Endothelial cell of umbilical vein (primary cell): ENCODE measurements at regions of chr20 and their contacts with region 1.

Region 1: DNA sequence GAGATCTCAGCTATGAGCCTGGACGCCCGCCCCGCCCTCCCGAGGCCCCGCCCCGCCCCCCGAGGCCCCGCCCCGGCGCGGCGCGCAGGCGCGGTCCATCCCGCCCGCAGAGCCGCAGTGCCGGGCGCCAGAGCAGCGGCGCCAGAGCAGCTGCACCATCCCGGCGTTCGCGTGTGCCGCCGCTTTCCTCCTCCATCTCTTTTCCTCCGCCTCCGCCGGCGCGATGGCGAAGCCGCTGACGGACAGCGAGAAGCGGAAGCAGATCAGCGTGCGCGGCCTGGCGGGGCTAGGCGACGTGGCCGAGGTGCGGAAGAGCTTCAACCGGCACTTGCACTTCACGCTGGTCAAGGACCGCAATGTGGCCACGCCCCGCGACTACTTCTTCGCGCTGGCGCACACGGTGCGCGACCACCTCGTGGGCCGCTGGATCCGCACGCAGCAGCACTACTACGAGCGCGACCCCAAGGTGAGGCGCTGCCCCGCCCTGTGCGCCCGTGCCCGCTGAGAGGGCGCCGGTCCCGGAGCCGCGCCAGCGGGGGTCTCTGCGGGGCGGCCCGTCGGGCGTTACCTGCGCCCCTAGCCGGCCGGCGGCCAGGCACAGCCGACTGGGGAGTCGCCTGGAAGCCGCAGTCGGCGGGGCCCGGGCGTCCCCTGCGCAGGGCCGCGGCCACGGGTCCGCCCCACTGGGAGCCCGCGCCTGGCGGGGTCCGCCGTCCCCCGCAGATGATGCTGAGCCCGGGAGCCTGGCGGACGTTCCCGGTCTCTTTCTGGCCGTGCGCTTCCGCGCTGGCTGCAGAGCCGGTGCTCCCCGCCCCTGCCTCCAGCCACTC is at the start of gene PYGB:
- DNase-seq: peak; percentile 88
- H3K4me3 ChIP-seq: peak within 1 kb of the TSS; percentile 71 to 84 (median 77)
- H3K27ac ChIP-seq: peak within 1 kb of the TSS; percentile 59
- H3K4me1 ChIP-seq: peaks cover 11% of the 10 kb centered on the region
- H3K27me3 ChIP-seq: no peaks in the 10 kb centered on the region
- CTCF ChIP-seq: no peak
- POLR2A ChIP-seq: peak; percentile 94
- total RNA-seq, gene PYGB: 57.2 and 60.2 TPM in 2 replicates

Region 2: DNA sequence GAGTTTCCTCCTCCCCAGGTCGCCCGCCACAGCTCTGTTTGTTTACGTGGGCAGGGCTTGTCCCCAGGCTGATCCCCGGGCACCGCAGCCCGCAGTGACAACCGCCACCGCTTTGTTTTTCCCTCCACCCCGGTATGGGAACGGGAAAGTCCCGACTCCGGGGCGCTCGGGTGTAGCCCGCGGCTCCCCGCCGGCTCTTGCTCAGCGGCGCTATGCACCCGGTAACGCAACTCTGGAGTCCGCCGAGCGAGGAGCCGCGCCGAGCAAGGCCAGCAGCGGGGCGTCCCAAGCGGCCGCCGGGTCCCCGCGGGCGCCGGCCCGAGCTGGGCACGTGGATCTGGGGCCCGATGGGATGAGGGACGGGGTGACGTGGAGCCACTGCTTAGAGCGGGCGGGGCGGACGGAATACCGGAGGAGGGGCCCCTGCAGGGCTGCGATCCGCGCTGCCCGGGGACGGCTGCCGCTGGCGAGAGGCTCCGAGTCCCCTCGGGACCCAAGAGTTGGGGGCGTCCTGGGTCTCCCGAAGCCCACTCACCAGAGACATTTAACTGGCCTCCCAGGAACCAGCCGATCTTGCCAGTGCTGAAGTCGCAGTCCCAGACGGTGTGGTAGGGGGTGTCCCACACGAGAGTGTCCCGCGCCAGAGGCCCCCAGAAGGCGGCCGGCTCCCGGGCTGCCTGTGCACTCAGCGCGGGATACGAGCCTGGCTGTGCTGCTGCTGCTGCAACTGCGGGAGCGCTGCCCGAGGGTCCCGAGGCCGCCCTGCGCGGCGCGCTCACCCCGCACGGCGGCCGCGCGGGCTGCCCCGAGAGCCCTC is 190.7 kb before region 1 on chr20:
- CTCF ChIA-PET with region 1: interaction called, 3 read pairs
- POLR2A ChIA-PET with region 1: no interaction called
- dilution Hi-C with region 1: no loop called
- intact Hi-C with region 1: loop called (anchors 5 kb)
- DNase-seq: peak; percentile 51
- H3K4me3 ChIP-seq: peak overlapping the region; percentile 1 to 50 (median 48)
- H3K27ac ChIP-seq: no peak overlapping the region
- H3K4me1 ChIP-seq: peaks cover 7% of the 10 kb centered on the region
- H3K27me3 ChIP-seq: peaks cover 13 to 19% of the 10 kb centered on the region in 2 experiments
- CTCF ChIP-seq: no peak
- POLR2A ChIP-seq: no peak

Region 3: DNA sequence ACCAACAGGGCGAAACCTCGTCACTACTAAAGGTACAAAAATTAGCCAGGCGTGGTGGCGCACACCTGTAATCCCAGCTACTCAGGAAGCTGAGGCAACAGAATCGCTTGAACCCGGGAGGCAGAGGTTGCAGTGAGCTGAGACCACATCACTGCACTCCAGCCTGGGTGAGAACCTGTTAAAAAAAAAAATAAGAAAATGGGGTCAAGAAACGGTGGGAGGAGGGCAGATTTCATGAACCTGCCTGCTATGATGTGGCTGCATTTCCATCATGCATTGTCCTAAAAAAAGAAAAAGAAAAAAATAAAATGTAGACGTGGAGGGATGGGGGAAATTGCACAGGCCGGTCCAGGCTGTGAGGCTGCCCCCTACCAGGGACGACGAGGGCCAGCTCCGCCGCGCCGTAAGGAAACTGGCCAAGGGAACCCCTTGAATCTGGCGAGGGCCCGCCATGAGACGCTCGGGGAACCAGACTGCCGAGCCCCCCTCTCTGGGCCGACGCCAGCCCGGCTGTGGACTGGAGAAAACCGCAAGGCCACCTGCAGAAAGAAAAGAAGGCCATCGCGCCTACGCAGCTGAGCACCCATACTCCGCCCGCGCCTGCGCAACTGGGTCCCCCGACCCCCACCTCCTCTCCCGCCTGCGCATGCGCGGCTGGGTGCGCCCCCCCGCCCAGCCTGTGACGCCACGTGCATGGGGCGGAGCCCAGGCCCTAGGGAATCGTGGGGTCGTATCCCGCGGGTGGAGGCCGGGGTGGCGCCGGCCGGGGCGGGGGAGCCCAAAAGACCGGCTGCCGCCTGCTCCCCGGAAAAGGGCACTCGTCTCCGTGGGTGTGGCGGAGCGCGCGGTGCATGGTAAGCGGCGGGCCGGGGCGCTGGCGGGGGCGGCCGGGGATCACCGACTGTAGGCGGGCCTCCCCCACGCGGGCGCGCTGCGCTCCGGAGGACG is 52.9 kb before region 1 on chr20 and contains the start of gene ENTPD6:
- CTCF ChIA-PET with region 1: interaction called, 18 read pairs
- POLR2A ChIA-PET with region 1: interaction called, 3 read pairs
- dilution Hi-C with region 1: no loop called
- intact Hi-C with region 1: loop called (anchors 1 kb)
- DNase-seq: peak; percentile 91
- H3K4me3 ChIP-seq: peak within 1 kb of the TSS; percentile 60 to 89 (median 79)
- H3K27ac ChIP-seq: peak within 1 kb of the TSS; percentile 46
- H3K4me1 ChIP-seq: peaks cover 5% of the 10 kb centered on the region
- H3K27me3 ChIP-seq: peaks cover 6 to 13% of the 10 kb centered on the region in 2 experiments
- CTCF ChIP-seq: peak in 1 of 2 donors; percentile 30
- POLR2A ChIP-seq: peak; percentile 89
- total RNA-seq, gene ENTPD6: 51.2 and 52.2 TPM in 2 replicates

Region 4: GRCh38 chr20:25204550-25205276 is 43.5 kb before region 1 on chr20:
- CTCF ChIA-PET with region 1: interaction called, 18 read pairs
- POLR2A ChIA-PET with region 1: no interaction called
- dilution Hi-C with region 1: no loop called
- intact Hi-C with region 1: no loop called
- DNase-seq: no peak
- H3K4me3 ChIP-seq: no peak overlapping the region
- H3K27ac ChIP-seq: no peak overlapping the region
- H3K4me1 ChIP-seq: no peaks in the 10 kb centered on the region
- H3K27me3 ChIP-seq: no peaks in the 10 kb centered on the region
- CTCF ChIP-seq: no peak
- POLR2A ChIP-seq: no peak

Region 5: GRCh38 chr20:25216199-25216945 is 31.8 kb before region 1 on chr20:
- CTCF ChIA-PET with region 1: interaction called, 93 read pairs
- POLR2A ChIA-PET with region 1: no interaction called
- dilution Hi-C with region 1: no loop called
- intact Hi-C with region 1: no loop called
- DNase-seq: no peak
- H3K4me3 ChIP-seq: no peak overlapping the region
- H3K27ac ChIP-seq: no peak overlapping the region
- H3K4me1 ChIP-seq: no peaks in the 10 kb centered on the region
- H3K27me3 ChIP-seq: no peaks in the 10 kb centered on the region
- CTCF ChIP-seq: no peak
- POLR2A ChIP-seq: no peak

Region 6: DNA sequence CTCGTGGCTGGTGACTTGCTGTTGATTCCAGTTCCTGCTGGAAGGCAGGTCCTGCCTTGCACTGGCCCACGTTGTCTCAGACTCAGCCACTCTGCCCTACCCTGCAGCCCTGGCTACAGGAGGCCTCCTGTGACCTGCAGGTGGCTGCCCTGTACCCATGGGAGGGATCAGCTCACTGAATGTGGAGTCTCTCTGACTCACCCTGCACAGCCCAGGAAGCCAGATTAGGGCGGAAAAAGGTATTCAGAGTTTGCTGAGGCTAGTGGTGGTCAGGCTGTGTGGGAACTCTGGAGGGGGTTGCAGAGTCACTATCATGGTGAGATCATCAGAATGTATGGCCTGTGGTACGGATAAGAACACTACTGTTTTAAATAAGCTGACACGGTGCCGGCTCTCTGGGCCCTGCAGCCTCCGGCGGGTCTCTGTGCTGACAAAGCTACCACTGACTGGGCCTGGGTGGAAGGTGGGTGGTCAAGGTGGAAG is 25.0 kb before region 1 on chr20:
- CTCF ChIA-PET with region 1: interaction called, 93 read pairs
- POLR2A ChIA-PET with region 1: no interaction called
- dilution Hi-C with region 1: no loop called
- intact Hi-C with region 1: no loop called
- DNase-seq: peak; percentile 61
- H3K4me3 ChIP-seq: no peak overlapping the region
- H3K27ac ChIP-seq: peak overlapping the region; percentile 43
- H3K4me1 ChIP-seq: peaks cover 18% of the 10 kb centered on the region
- H3K27me3 ChIP-seq: no peaks in the 10 kb centered on the region
- CTCF ChIP-seq: no peak
- POLR2A ChIP-seq: no peak

Region 7: DNA sequence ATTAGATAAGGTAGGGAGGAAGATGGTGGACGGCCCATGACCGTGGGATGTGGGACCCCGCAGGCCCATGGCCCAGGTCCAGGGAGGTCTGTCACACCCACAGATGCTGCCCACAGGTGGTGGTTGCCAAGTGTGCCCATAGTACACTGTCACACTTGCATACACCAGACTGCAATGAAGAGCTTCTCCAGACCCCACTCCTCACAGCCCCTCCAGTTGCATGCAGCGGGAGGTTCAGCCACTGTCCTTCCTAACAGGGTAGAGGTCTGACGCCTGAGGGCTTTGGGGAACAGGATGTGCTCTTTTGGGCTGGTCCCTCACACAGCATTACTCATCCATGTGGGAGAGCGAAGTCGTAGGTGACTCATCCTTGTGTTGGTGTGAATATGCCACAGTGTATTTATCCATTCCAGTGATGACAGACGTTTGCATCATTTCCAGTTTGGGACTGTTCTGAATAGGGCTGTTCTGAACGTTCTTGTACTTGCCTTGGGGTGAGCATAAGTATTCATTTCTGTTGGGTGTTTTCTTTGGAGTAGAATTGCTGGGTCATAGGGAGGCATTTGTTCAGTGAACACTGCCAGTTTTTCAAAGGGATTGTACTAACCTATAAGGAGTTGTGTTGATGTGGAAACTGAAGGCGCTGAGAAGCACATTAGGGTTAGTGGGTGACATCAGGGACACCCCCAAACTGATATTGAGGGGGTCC is 10.4 kb before region 1 on chr20:
- CTCF ChIA-PET with region 1: interaction called, 21 read pairs
- POLR2A ChIA-PET with region 1: no interaction called
- dilution Hi-C with region 1: no loop called
- intact Hi-C with region 1: loop called (anchors 1 kb)
- DNase-seq: peak; percentile 92
- H3K4me3 ChIP-seq: no peak overlapping the region
- H3K27ac ChIP-seq: peak overlapping the region; percentile 80
- H3K4me1 ChIP-seq: peaks cover 19% of the 10 kb centered on the region
- H3K27me3 ChIP-seq: no peaks in the 10 kb centered on the region
- CTCF ChIP-seq: no peak
- POLR2A ChIP-seq: peak; percentile 51